SK-N-SH (cell line): ENCODE measurements at regions of chr12 and their contacts with region 1.

Region 1: DNA sequence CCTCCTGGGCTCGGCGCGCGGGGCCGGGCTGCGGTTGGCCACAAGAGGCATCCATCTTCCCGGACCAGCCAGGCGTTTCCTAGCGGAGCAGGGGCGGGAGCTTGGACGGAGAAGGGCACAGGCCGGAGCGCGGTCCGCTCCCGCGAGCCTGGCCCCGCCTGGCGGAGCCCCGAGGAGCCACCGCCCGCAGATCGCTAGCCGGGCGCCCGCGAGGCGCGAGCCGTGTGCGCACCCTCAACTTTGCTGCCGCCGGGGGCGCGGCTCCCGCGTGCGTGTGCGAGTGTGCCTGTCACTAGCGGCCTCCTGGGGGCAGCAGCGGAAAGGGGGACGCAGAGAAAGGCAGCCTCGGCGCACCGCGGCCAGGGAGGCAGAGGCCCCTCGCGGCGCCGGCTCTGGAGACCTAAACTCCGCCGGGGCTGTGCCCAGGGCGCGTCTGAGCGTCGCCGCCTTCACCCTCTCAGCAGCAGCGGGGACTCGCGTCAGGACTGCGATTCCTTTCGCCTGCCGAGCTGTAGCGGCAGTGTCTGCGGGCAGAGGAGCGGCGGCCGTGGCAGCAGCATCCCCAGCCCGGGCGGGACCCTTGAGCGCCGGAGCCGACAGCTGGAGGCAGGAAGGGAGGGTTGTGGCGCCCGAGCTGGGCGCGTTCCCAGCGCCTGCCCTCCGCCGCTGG is 644 bp upstream of the SRGAP1 start:
- DNase-seq: peak; percentile 93
- H3K4me3 ChIP-seq: peak overlapping the region; percentile 82 to 90
- H3K27ac ChIP-seq: peak overlapping the region; percentile 79 to 92
- H3K4me1 ChIP-seq: peaks cover 7 to 15% of the 10 kb centered on the region in 2 experiments; a peak in 3 of 4 replicates
- H3K27me3 ChIP-seq: no peaks in the 10 kb centered on the region
- CTCF ChIP-seq: peak; percentile 79
- EP300 ChIP-seq: 0 out of 4 replicates have a peak, but pooled peaks of 1 of the 2 experiments have one; percentile 4
- RAD21 ChIP-seq: peak; percentile 96

Region 2: GRCh38 chr12:63353559-63353958 is 490.3 kb before region 1 on chr12:
- CTCF ChIA-PET with region 1: no interaction called
- POLR2A ChIA-PET with region 1: no interaction called
- DNase-seq: no peak
- H3K4me3 ChIP-seq: no peak overlapping the region
- H3K27ac ChIP-seq: no peak overlapping the region
- H3K4me1 ChIP-seq: no peaks in the 10 kb centered on the region
- H3K27me3 ChIP-seq: no peaks in the 10 kb centered on the region; the same call in 1 of the 2 replicates
- CTCF ChIP-seq: no peak; the same call in 1 of the 2 replicates
- EP300 ChIP-seq: no peak
- RAD21 ChIP-seq: no peak

Region 3: GRCh38 chr12:63826006-63826585 is 17.8 kb before region 1 on chr12:
- CTCF ChIA-PET with region 1: interaction called, 14 read pairs
- POLR2A ChIA-PET with region 1: no interaction called
- DNase-seq: peak; percentile 72
- H3K4me3 ChIP-seq: peak overlapping the region in 1 of 2 experiments; percentile 37; a peak in 1 of 4 replicates
- H3K27ac ChIP-seq: no peak overlapping the region
- H3K4me1 ChIP-seq: no peaks in the 10 kb centered on the region
- H3K27me3 ChIP-seq: no peaks in the 10 kb centered on the region
- CTCF ChIP-seq: peak; percentile 88
- EP300 ChIP-seq: no peak
- RAD21 ChIP-seq: peak; percentile 98

Region 4: DNA sequence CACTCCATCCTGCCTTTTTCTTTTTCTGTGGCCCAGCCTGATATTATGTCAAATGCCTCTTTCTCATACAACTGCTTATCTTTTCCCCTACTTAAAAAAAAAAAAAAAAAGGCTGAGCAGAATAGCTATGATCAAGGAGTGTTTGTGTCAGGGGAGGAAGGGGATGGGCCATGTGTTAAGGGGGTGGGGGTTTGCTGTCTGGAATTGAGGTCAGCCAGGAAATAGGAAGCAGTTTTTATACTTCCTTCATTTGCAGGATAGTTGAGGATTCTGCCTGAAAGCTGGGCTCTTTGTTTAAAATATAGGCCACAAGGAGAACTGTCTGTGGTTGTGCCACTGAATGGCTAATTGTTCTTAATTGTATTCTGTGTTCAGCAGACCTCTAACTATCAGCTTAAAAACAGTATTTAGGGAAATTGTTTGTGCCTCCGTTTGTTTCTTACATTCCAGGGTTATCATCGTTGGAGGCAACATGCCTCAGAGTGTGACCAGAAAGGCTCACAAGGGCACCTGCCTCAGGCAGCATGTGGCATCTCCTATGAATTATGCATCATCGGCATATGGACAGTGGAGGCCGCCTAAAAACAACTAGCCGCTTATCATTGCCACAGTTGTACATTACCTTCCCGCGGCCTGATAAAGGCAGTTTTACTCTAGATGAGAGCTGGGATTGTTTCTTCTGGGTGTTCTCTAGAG is 96.6 kb after region 1 on chr12:
- CTCF ChIA-PET with region 1: interaction called, 25 read pairs
- POLR2A ChIA-PET with region 1: interaction called, 3 read pairs
- DNase-seq: peak; percentile 52
- H3K4me3 ChIP-seq: no peak overlapping the region
- H3K27ac ChIP-seq: peak overlapping the region in 1 of 2 experiments; percentile 97; a peak in 2 of 4 replicates
- H3K4me1 ChIP-seq: peaks cover 16 to 48% of the 10 kb centered on the region in 2 experiments; a peak in 3 of 4 replicates
- H3K27me3 ChIP-seq: no peaks in the 10 kb centered on the region
- CTCF ChIP-seq: no peak
- EP300 ChIP-seq: peak in 1 of 2 experiments; percentile 66; a peak in 1 of 4 replicates
- RAD21 ChIP-seq: peak; percentile 57

Region 5: GRCh38 chr12:64039281-64039871 is 195.5 kb after region 1 on chr12:
- CTCF ChIA-PET with region 1: interaction called, 13 read pairs
- POLR2A ChIA-PET with region 1: no interaction called
- DNase-seq: no peak
- H3K4me3 ChIP-seq: no peak overlapping the region
- H3K27ac ChIP-seq: peak overlapping the region in 1 of 2 experiments; percentile 78; a peak in 2 of 4 replicates
- H3K4me1 ChIP-seq: peaks cover 10 to 29% of the 10 kb centered on the region in 2 experiments; a peak in 3 of 4 replicates
- H3K27me3 ChIP-seq: no peaks in the 10 kb centered on the region
- CTCF ChIP-seq: no peak
- EP300 ChIP-seq: no peak
- RAD21 ChIP-seq: no peak

Region 6: GRCh38 chr12:64171715-64172114 is 327.9 kb after region 1 on chr12:
- CTCF ChIA-PET with region 1: interaction called, 21 read pairs
- POLR2A ChIA-PET with region 1: no interaction called
- DNase-seq: no peak
- H3K4me3 ChIP-seq: no peak overlapping the region
- H3K27ac ChIP-seq: peak overlapping the region in 1 of 2 experiments; percentile 71; a peak in 2 of 4 replicates
- H3K4me1 ChIP-seq: peaks cover 2 to 25% of the 10 kb centered on the region in 2 experiments; a peak in 2 of 4 replicates
- H3K27me3 ChIP-seq: no peaks in the 10 kb centered on the region
- CTCF ChIP-seq: no peak
- EP300 ChIP-seq: peak in 1 of 2 experiments; percentile 66; a peak in 2 of 4 replicates
- RAD21 ChIP-seq: no peak

Region 7: DNA sequence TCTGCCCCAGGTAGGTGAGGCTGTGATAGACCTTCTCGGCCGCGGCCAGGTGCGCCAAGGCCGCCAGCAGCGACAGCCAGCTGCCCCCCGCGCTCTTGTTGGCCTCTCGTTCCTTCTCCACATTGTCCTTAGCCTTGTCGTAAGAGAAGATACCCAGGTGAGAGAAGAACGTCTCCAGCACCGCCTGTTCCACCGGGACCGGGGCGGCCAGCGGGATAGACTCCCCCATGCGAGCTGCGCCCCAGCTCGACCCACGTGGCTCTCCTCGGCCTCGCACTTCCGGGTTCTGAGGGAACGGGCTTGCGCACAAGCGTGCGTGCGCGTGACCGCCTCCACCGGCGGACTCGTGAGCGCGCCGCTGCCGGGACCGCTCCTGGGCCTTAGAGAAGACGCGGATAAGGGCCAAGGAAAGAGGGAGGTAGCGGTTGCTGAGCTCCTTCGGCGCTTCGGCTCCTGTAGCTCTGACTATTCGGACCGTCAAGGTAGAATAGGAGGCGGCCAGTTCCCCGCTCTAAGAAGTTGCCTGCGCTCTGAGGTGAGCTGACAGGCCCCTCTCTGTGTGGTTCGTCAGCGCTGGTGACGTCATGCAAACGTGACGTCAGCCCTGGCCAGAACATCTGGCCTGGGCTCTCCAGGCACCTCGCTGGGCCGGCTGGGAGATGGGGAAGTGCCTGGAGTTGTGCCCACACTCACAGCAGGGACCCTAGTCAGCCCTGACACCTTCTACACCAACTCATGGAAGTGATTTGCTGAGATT is 378.3 kb after region 1 on chr12 and contains the start of gene KICS2:
- CTCF ChIA-PET with region 1: interaction called, 15 read pairs
- POLR2A ChIA-PET with region 1: interaction called, 12 read pairs
- DNase-seq: peak; percentile 93
- H3K4me3 ChIP-seq: peak within 1 kb of the TSS; percentile 76 to 98
- H3K27ac ChIP-seq: peak within 1 kb of the TSS; percentile 82 to 85
- H3K4me1 ChIP-seq: peaks cover 8 to 12% of the 10 kb centered on the region in 2 experiments; a peak in 3 of 4 replicates
- H3K27me3 ChIP-seq: no peaks in the 10 kb centered on the region
- CTCF ChIP-seq: no peak
- EP300 ChIP-seq: no peak
- RAD21 ChIP-seq: no peak
- polyA plus RNA-seq, gene KICS2: 3.7 and 4.1 TPM in 2 replicates

Region 8: GRCh38 chr12:64256166-64256800 is 412.4 kb after region 1 on chr12:
- CTCF ChIA-PET with region 1: interaction called, 109 read pairs
- POLR2A ChIA-PET with region 1: interaction called, 3 read pairs
- DNase-seq: peak; percentile 48
- H3K4me3 ChIP-seq: no peak overlapping the region; a peak in 1 of 4 replicates
- H3K27ac ChIP-seq: no peak overlapping the region
- H3K4me1 ChIP-seq: no peaks in the 10 kb centered on the region
- H3K27me3 ChIP-seq: no peaks in the 10 kb centered on the region
- CTCF ChIP-seq: peak; percentile 80
- EP300 ChIP-seq: no peak
- RAD21 ChIP-seq: peak; percentile 94